Activated CD8-positive, alpha-beta T cell treated with anti-CD3 and anti-CD28 coated beads, Interleukin-2, amount 10 ng/mL, durations not matched to agents 7 days and 5 days (primary cell): ENCODE measurements at regions of chr7 and their contacts with region 1.

Region 1: GRCh38 chr7:130896898-130897514 is 163.0 kb upstream of the KLF14 start:
- DNase-seq: peak; percentile 79
- ATAC-seq: peak; percentile 80
- H3K4me3 Mint-ChIP-seq: no peak overlapping the region
- H3K27ac Mint-ChIP-seq: peak overlapping the region; percentile 68
- H3K4me1 Mint-ChIP-seq: peaks cover 73% of the 10 kb centered on the region
- H3K27me3 Mint-ChIP-seq: no peaks in the 10 kb centered on the region

Region 2: GRCh38 chr7:130793855-130794618 is 103.0 kb before region 1 on chr7:
- CTCF ChIA-PET with region 1: no interaction called
- POLR2A ChIA-PET with region 1: no interaction called
- DNase-seq: no peak
- ATAC-seq: no peak
- H3K4me3 Mint-ChIP-seq: no peak overlapping the region
- H3K27ac Mint-ChIP-seq: no peak overlapping the region
- H3K4me1 Mint-ChIP-seq: no peaks in the 10 kb centered on the region
- H3K27me3 Mint-ChIP-seq: peaks cover 20% of the 10 kb centered on the region

Region 3: DNA sequence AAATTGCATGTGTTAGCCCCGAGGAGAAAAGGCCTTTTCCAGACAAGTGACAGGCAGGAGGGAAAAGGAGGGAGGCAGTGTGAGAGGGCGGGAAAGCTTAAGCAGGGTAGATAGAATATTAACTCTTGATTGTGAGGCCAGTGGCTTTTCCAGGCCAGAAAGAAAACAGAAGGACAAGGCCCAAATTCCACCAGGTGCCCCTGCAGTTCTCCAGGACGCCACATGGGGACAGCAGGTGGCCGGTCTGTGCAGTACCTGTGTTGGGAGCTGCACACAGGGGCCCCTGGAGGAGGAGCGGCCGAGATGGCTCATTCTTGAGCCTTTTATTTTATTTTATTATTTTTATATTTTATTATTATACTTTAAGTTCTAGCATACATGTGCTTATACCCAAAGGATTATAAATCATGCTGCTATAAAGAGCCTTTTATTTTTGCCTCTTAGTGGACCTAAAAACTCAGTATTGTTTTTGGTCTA is 21.7 kb before region 1 on chr7:
- CTCF ChIA-PET with region 1: interaction called, 21 read pairs
- POLR2A ChIA-PET with region 1: no interaction called
- DNase-seq: peak; percentile 66
- ATAC-seq: peak; percentile 80
- H3K4me3 Mint-ChIP-seq: no peak overlapping the region
- H3K27ac Mint-ChIP-seq: no peak overlapping the region
- H3K4me1 Mint-ChIP-seq: peaks cover 19% of the 10 kb centered on the region
- H3K27me3 Mint-ChIP-seq: no peaks in the 10 kb centered on the region

Region 4: GRCh38 chr7:130941322-130942210 is 44.6 kb after region 1 on chr7:
- CTCF ChIA-PET with region 1: interaction called, 60 read pairs
- POLR2A ChIA-PET with region 1: no interaction called
- DNase-seq: no peak
- ATAC-seq: peak; percentile 18
- H3K4me3 Mint-ChIP-seq: peak overlapping the region; percentile 72
- H3K27ac Mint-ChIP-seq: peak overlapping the region; percentile 75
- H3K4me1 Mint-ChIP-seq: peaks cover 83% of the 10 kb centered on the region
- H3K27me3 Mint-ChIP-seq: no peaks in the 10 kb centered on the region

Region 5: DNA sequence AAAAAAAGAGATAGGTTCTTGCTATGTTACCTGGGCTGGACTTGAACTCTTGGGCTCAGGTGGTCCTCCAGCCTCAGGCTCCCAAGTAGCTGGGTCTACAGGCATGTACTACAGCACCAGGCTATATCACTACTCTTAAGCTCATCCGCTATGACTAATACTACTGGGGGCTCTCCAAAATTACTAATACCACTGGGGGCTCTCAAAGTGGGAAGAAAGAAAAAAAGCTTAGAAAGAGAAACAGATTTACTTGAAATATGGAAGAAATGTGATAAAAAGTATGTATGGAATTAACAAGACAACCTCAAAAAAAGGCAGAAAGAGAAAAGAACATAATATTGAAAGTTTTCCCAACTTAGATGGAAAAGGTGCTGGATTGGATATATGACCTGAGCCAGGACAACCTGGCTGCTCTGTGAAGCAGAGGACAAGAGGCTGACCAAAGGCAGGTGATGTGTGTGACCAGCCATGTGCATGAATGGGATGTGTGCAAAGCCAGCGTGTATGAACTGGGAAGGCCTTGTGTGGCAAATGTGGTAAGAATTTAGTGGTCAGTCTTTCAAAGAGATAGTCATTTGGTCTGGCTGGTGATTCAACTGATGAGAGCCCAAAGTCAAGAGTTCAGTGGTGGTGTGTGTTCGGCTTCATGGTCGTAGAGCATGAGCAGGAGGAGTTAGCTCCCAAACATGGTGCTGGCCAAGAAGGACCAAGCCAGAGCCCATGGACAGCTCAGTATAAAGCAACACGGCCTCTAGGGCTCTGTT is 69.4 kb after region 1 on chr7:
- CTCF ChIA-PET with region 1: interaction called, 60 read pairs
- POLR2A ChIA-PET with region 1: no interaction called
- DNase-seq: no peak
- ATAC-seq: peak; percentile 23
- H3K4me3 Mint-ChIP-seq: no peak overlapping the region
- H3K27ac Mint-ChIP-seq: peak overlapping the region; percentile 5
- H3K4me1 Mint-ChIP-seq: peaks cover 61% of the 10 kb centered on the region
- H3K27me3 Mint-ChIP-seq: no peaks in the 10 kb centered on the region

Region 6: DNA sequence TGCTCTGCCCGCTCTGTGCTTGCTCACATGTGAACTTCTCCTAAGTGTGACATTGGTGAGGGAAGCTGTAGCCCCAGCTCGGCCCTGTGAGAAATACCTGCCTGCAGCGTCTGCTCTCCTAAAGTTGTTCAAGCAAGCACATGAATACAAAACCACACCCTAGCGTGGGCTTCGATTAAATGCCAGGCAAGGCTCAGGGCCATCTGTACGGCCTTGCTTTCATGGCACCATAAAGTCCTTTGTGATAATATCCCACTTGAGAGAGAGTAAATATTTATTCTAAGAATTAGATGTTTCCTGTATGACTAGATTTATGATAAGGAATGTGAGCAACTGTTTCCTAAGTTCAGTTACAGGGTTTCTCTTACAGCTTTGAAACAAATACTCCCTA is 99.8 kb after region 1 on chr7:
- CTCF ChIA-PET with region 1: interaction called, 13 read pairs
- POLR2A ChIA-PET with region 1: no interaction called
- DNase-seq: peak; percentile 9
- ATAC-seq: peak; percentile 43
- H3K4me3 Mint-ChIP-seq: no peak overlapping the region
- H3K27ac Mint-ChIP-seq: peak overlapping the region; percentile 53
- H3K4me1 Mint-ChIP-seq: peaks cover 38% of the 10 kb centered on the region
- H3K27me3 Mint-ChIP-seq: no peaks in the 10 kb centered on the region

Region 7: DNA sequence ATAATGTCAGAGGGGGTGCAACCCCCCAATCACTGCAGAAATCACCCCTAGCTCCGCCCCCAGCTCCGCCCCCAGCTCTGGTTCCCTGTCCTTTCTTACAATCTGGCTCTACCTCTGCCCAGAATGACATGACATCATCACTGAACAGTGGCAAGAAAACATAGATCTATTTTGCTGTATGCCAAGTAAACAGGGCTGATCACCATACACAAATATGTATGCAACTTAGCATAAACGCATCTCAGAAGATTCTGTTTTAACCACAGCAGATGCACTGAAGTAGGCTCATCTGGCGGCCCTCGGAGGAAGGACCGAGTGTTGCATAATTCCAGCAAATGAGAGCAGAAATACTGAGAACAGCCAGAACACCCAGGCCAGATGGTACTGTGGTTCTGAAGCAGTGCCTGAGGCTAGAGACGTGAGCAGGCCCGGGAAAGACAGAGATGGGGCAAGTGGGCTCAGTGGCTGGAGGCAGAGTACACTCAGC is 130.3 kb after region 1 on chr7:
- CTCF ChIA-PET with region 1: interaction called, 15 read pairs
- POLR2A ChIA-PET with region 1: no interaction called
- DNase-seq: no peak
- ATAC-seq: peak; percentile 42
- H3K4me3 Mint-ChIP-seq: no peak overlapping the region
- H3K27ac Mint-ChIP-seq: peak overlapping the region; percentile 22
- H3K4me1 Mint-ChIP-seq: peaks cover 57% of the 10 kb centered on the region
- H3K27me3 Mint-ChIP-seq: no peaks in the 10 kb centered on the region